Posterior vena cava (tissue), 2 donors: ENCODE measurements at regions of chr2 and their contacts with region 1.

Region 1: GRCh38 chr2:96509114-96509846 is 4.1 kb upstream of the NEURL3 start:
- DNase-seq: peak; percentile 97

Region 2: GRCh38 chr2:96305091-96305978 is 203.9 kb before region 1 on chr2 and contains the start of gene SNRNP200:
- intact Hi-C with region 1: loop called in 1 of 2 experiments (anchors 5 kb)
- DNase-seq: peak; percentile 96
- total RNA-seq, gene SNRNP200: 67.2 to 78.3 TPM

Region 3: DNA sequence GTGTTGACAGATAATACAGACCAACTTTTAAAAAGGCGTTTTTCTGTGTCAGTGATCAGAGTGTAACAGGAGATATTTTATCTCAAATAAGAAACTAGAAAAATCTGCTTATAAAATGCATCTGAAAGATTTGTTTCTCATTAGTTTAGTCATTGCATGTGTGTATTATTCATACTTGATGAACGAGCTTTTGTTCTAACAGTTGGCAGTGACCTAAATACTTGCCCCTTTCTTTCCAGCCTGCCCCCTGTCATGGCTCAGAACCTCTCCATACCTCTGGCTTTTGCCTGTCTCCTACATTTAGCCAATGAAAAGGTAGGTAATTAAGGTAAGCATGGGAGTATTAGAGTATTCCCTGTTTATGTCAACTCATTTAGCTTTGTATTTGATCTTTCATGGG is 140.1 kb before region 1 on chr2:
- intact Hi-C with region 1: no loop called
- DNase-seq: no peak

Region 4: GRCh38 chr2:96407041-96407918 is 102.0 kb before region 1 on chr2:
- intact Hi-C with region 1: loop called (anchors 5 kb)
- DNase-seq: peak; percentile 83

Region 5: DNA sequence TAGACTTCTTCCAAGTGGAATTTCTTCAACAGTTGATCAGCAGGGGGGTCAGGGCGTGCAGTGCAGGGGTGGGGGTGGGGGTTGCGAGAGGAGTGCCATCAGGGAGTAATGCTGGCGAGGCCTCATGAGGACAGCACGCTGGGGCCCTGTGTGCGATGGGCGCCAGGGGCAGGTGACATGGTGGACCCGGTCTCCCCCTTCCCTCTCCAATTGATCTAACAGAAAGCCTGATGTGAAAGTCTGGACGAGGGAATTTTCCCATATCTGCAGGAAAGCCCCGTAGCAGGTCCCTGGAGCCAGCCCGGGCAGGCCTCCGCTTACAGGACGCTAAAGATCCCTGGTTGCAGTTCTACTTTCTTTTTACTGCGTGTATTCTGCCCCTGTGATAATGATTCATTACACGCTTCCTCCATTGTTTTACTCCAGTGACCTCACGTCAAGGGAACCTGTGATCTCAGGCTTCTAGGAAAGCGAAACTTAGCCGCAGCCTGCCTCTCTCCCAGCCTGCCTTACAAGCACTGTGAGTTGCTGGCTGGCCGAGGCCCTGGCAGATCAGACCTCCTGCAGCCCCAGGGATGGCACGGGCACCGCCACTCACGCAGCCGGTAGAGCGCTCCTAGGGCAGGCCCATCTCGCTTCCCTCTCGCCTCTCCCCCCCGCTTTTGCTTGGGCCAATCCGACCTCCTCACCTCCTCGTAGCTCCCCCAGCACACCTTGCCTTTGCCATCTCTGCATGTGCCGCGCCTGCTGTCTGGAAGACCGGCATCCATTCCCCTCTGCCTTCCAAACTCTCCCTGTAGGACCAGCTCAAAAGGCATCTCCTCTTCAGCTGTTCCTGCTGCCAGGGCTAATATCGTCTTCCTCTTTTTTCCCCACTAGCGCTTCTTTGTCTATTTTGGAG is 23.3 kb before region 1 on chr2:
- intact Hi-C with region 1: no loop called
- DNase-seq: peak; percentile 89

Region 6: GRCh38 chr2:96495982-96496629 is 13.2 kb before region 1 on chr2:
- intact Hi-C with region 1: loop called in 1 of 2 experiments (anchors 1 kb)
- DNase-seq: no peak